PC-3 (cell line): ENCODE measurements at regions of chr13 and their contacts with region 1.

Region 1: DNA sequence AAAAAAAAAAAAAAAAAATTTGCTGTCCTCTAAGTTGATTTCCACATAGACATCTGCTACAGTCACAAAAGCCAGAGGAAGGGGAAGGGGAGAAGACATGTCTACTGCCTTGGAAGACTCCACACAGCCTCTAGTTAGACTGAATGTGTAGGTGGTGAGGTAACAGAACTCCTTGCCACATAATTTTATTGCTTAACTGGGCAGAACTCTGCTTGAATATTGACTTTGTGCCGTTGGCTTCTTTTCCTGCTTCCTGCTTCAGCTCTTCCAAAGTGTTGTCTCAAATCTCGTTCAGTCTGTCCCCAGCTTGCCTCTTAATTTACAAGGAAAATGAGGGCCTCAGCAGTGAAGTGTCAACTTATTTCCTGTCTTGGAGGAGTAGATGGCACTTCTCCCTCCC is 37.1 kb downstream of the ESD start:
- DNase-seq: peak; percentile 33
- ATAC-seq: peak; percentile 52
- H3K4me3 ChIP-seq: no peak overlapping the region
- H3K27ac ChIP-seq: peak overlapping the region; percentile 16; the same call in 1 of the 2 replicates
- H3K4me1 ChIP-seq: peaks cover 36% of the 10 kb centered on the region
- H3K27me3 ChIP-seq: no peaks in the 10 kb centered on the region
- CTCF ChIP-seq: no peak

Region 2: GRCh38 chr13:46369506-46370277 is 390.2 kb before region 1 on chr13:
- CTCF ChIA-PET with region 1: no interaction called
- POLR2A ChIA-PET with region 1: no interaction called
- intact Hi-C with region 1: no loop called
- DNase-seq: no peak
- ATAC-seq: no peak
- H3K4me3 ChIP-seq: no peak overlapping the region
- H3K27ac ChIP-seq: no peak overlapping the region
- H3K4me1 ChIP-seq: no peaks in the 10 kb centered on the region
- H3K27me3 ChIP-seq: no peaks in the 10 kb centered on the region
- CTCF ChIP-seq: no peak

Region 3: GRCh38 chr13:46804391-46804815 is 44.6 kb after region 1 on chr13:
- CTCF ChIA-PET with region 1: no interaction called
- POLR2A ChIA-PET with region 1: no interaction called
- intact Hi-C with region 1: loop called (anchors 1 kb)
- DNase-seq: peak; percentile 91
- ATAC-seq: peak; percentile 99
- H3K4me3 ChIP-seq: no peak overlapping the region
- H3K27ac ChIP-seq: peak overlapping the region; percentile 46
- H3K4me1 ChIP-seq: peaks cover 19% of the 10 kb centered on the region
- H3K27me3 ChIP-seq: no peaks in the 10 kb centered on the region
- CTCF ChIP-seq: no peak